Dendritic cell treated with granulocyte-macrophage colony-stimulating factor and Interleukin-4, amounts not matched to agents 40 ng/mL and 50 ng/mL, for 4 days (primary cell): ENCODE measurements at regions of chr9 and their contacts with region 1.

Region 1: GRCh38 chr9:32589083-32589723 is 16.2 kb upstream of the NDUFB6 start:
- H3K4me3 Mint-ChIP-seq: no peak overlapping the region
- H3K27ac Mint-ChIP-seq: no peak overlapping the region
- H3K4me1 Mint-ChIP-seq: no peaks in the 10 kb centered on the region
- H3K27me3 Mint-ChIP-seq: peaks cover 33% of the 10 kb centered on the region

Region 2: DNA sequence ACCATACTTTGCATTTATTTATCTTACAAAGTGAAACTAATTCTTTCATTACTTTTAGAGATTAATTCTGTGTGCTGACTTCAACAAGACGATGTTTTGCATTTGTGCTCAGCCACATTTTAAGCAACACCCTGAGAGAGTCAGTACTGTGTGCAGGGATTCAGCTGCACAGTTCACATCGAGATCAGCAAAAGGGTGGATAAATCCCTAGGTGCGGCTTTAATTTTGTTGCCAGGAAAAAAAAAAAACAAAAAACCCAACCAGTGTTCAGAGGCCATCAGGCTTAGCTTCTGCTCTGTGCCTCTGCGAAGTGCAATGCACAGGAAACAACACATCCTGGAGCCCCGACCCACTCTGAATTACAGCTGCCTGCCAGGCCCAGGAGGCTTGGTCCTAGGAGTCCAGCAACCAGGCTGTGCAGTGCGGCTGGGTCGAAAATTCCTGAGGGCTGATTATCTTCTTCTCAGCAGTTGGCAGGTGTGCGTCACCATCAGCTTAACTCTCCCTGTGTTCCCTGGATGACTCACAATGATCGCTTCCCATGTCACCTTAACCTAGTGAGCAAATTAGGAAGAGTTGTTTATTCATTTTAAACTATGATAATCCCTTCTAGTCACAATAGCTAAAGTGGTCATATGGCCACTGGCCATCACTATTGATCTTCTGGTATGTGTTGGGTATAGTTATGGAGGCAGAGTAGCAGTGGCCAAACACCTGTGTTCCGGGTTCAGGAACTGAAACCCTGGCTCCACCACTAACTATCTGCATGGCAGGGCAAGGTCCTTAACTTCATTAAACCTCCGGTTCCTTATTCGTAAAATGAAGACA is 14.9 kb after region 1 on chr9:
- intact Hi-C with region 1: no loop called
- H3K4me3 Mint-ChIP-seq: no peak overlapping the region
- H3K27ac Mint-ChIP-seq: no peak overlapping the region
- H3K4me1 Mint-ChIP-seq: peaks cover 13% of the 10 kb centered on the region
- H3K27me3 Mint-ChIP-seq: peaks cover 27% of the 10 kb centered on the region

Region 3: GRCh38 chr9:32703635-32704034 is 114.4 kb after region 1 on chr9:
- intact Hi-C with region 1: no loop called
- H3K4me3 Mint-ChIP-seq: no peak overlapping the region
- H3K27ac Mint-ChIP-seq: no peak overlapping the region
- H3K4me1 Mint-ChIP-seq: no peaks in the 10 kb centered on the region
- H3K27me3 Mint-ChIP-seq: peaks cover 6% of the 10 kb centered on the region

Region 4: GRCh38 chr9:32968101-32969011 is 379.2 kb after region 1 on chr9:
- intact Hi-C with region 1: loop called (anchors 1 kb)
- H3K4me3 Mint-ChIP-seq: no peak overlapping the region
- H3K27ac Mint-ChIP-seq: no peak overlapping the region
- H3K4me1 Mint-ChIP-seq: no peaks in the 10 kb centered on the region
- H3K27me3 Mint-ChIP-seq: no peaks in the 10 kb centered on the region